ENCODE measurements at regions of chr12 and their contacts with region 1.

Region 1: DNA sequence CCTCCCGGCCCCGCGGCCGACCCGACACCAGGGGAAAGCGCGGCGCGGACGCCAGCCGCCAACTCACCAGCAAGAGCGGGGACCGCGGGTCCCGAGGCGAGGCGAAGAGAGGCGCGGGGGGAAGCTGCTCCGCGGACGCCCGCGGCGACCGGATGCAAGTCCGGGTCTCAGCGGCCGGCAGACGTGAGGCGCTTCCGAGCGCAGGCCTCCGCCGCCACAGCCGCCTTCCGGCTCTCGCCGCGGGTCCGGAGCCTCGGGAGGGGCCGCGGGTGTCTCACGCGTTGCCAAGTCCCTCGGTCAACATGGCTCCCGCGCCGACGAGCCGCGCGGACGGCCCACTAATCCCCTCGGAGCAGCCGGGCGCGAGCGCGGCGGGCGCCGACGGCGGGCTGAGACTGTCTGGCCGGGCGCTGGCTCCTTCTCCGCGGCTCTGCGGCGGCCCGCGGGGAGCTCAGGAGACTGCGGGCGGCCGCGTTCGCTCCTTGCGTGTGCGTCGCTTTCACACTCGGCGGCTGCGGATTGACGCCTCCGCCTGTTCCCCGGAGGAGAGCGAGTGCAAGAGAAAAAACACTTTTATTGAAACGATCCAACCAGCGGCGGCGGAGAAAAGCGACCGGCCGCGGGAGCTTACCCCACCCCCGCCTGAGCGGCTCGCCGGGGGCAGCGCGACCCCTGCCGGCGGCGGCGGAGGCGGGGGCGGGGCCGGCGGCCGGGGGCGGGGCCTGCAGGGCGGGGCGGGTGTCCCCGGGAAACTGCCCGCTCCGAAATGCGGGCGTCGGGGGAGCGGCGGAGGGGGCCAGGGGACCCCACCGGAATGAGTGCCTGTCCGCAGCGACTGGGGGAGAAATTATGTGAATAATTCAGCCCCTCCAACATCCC is at the start of gene CDK17:
- DNase-seq: peak; percentile 82 to 97 (median 88)
- ATAC-seq: peak; percentile 63
- H3K4me3 ChIP-seq: peak within 1 kb of the TSS; percentile 88
- H3K4me3 Mint-ChIP-seq: peak within 1 kb of the TSS; percentile 99
- H3K27ac ChIP-seq: peak within 1 kb of the TSS; percentile 86 to 99
- H3K27ac Mint-ChIP-seq: peak within 1 kb of the TSS; percentile 93
- H3K4me1 ChIP-seq: peaks cover 15% of the 10 kb centered on the region
- H3K4me1 Mint-ChIP-seq: peaks cover 49% of the 10 kb centered on the region
- H3K27me3 ChIP-seq: no peaks in the 10 kb centered on the region
- H3K27me3 Mint-ChIP-seq: no peaks in the 10 kb centered on the region
- CTCF ChIP-seq: no peak
- total RNA-seq, gene CDK17: 112 to 113 TPM

Region 2: GRCh38 chr12:96061864-96062453 is 338.2 kb before region 1 on chr12:
- CTCF ChIA-PET with region 1: interaction called, 4 read pairs
- POLR2A ChIA-PET with region 1: interaction called, 3 read pairs
- intact Hi-C with region 1: loop called (anchors 1 kb)
- DNase-seq: peak; percentile 64 to 90 (median 70)
- ATAC-seq: peak; percentile 90
- H3K4me3 ChIP-seq: no peak overlapping the region
- H3K4me3 Mint-ChIP-seq: no peak overlapping the region
- H3K27ac ChIP-seq: no peak overlapping the region
- H3K27ac Mint-ChIP-seq: no peak overlapping the region
- H3K4me1 ChIP-seq: peaks cover 18% of the 10 kb centered on the region
- H3K4me1 Mint-ChIP-seq: peaks cover 27% of the 10 kb centered on the region
- H3K27me3 ChIP-seq: no peaks in the 10 kb centered on the region
- H3K27me3 Mint-ChIP-seq: no peaks in the 10 kb centered on the region
- CTCF ChIP-seq: peak; percentile 85

Region 3: DNA sequence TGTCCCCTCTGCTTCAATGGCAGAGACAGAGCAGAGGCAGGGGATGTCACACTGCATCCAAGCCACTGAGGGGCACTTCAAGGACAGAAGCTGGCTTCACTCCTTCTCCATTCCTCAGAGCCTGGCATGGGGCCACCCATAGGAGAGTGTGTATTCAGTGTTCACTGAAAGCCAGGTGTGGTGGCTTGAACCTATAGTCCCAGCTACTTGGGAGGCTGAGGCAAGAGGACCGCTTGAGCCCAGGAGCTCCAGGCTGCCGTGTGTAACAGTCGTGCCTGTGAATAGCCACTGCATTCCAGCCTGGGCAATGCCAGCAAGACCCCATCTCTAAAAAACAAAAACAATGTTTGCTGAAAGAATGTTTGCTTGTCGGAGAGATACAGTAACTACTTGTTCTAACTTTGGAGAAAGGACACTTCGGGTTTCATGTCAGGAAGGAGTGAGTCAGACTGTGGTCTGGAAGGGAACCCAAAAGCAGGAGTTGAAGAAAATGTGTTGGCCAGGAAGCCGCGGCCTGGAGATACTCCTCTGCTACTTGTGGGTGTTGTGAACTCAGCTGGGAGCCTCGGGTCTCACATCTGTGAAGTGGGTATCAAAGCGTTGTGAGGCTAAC is 162.6 kb before region 1 on chr12:
- CTCF ChIA-PET with region 1: interaction called, 15 read pairs
- POLR2A ChIA-PET with region 1: interaction called, 9 read pairs
- intact Hi-C with region 1: no loop called
- DNase-seq: peak in 12 of 14 experiments; percentile 23 to 83 (median 43)
- ATAC-seq: peak; percentile 9
- H3K4me3 ChIP-seq: peak overlapping the region; percentile 4
- H3K4me3 Mint-ChIP-seq: peak overlapping the region; percentile 28
- H3K27ac ChIP-seq: peak overlapping the region; percentile 32 to 68
- H3K27ac Mint-ChIP-seq: peak overlapping the region; percentile 97
- H3K4me1 ChIP-seq: peaks cover 86% of the 10 kb centered on the region
- H3K4me1 Mint-ChIP-seq: peaks cover 79% of the 10 kb centered on the region
- H3K27me3 ChIP-seq: no peaks in the 10 kb centered on the region
- H3K27me3 Mint-ChIP-seq: no peaks in the 10 kb centered on the region
- CTCF ChIP-seq: no peak

Region 4: GRCh38 chr12:96308881-96309280 is 91.3 kb before region 1 on chr12:
- CTCF ChIA-PET with region 1: interaction called, 5 read pairs
- POLR2A ChIA-PET with region 1: interaction called, 67 read pairs
- intact Hi-C with region 1: loop called in 1 of 2 experiments (anchors 5 kb)
- DNase-seq: no peak
- ATAC-seq: no peak
- H3K4me3 ChIP-seq: no peak overlapping the region
- H3K4me3 Mint-ChIP-seq: no peak overlapping the region
- H3K27ac ChIP-seq: no peak overlapping the region
- H3K27ac Mint-ChIP-seq: peak overlapping the region; percentile 10
- H3K4me1 ChIP-seq: no peaks in the 10 kb centered on the region
- H3K4me1 Mint-ChIP-seq: peaks cover 40% of the 10 kb centered on the region
- H3K27me3 ChIP-seq: no peaks in the 10 kb centered on the region
- H3K27me3 Mint-ChIP-seq: no peaks in the 10 kb centered on the region
- CTCF ChIP-seq: no peak

Region 5: GRCh38 chr12:96343347-96343954 is 56.7 kb before region 1 on chr12:
- CTCF ChIA-PET with region 1: interaction called, 6 read pairs
- POLR2A ChIA-PET with region 1: interaction called, 49 read pairs
- intact Hi-C with region 1: no loop called
- DNase-seq: peak in 3 of 14 experiments; percentile 51 to 65 (median 61)
- ATAC-seq: no peak
- H3K4me3 ChIP-seq: no peak overlapping the region
- H3K4me3 Mint-ChIP-seq: peak overlapping the region; percentile 35
- H3K27ac ChIP-seq: no peak overlapping the region
- H3K27ac Mint-ChIP-seq: peak overlapping the region; percentile 9
- H3K4me1 ChIP-seq: peaks cover 16% of the 10 kb centered on the region
- H3K4me1 Mint-ChIP-seq: peaks cover 77% of the 10 kb centered on the region
- H3K27me3 ChIP-seq: no peaks in the 10 kb centered on the region
- H3K27me3 Mint-ChIP-seq: no peaks in the 10 kb centered on the region
- CTCF ChIP-seq: no peak

Region 6: DNA sequence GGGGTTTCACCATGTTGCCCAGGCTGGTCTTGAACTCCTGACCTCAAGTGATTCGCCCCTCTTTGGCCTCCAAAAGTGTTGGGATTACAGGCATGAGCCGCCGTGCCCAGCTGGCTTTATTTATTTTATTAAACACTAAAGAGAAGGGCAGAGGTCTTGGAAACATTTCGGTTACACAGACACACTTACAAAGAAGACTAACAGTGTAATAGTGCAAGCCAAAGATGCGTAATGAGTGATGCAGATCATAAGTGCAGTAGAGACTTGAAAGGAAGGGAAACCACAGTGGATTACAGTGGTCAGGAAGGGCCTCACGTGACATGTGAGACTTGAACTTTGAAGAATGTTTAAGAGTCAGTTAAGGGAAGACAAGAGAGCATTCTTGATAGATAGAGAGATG is 33.9 kb after region 1 on chr12:
- CTCF ChIA-PET with region 1: interaction called, 9 read pairs
- POLR2A ChIA-PET with region 1: interaction called, 16 read pairs
- intact Hi-C with region 1: loop called (anchors 1 to 5 kb)
- DNase-seq: peak; percentile 37 to 95 (median 57)
- ATAC-seq: peak; percentile 98
- H3K4me3 ChIP-seq: peak overlapping the region; percentile 6
- H3K4me3 Mint-ChIP-seq: peak overlapping the region; percentile 52
- H3K27ac ChIP-seq: peak overlapping the region; percentile 50 to 73
- H3K27ac Mint-ChIP-seq: peak overlapping the region; percentile 75
- H3K4me1 ChIP-seq: peaks cover 40% of the 10 kb centered on the region
- H3K4me1 Mint-ChIP-seq: peaks cover 26% of the 10 kb centered on the region
- H3K27me3 ChIP-seq: no peaks in the 10 kb centered on the region
- H3K27me3 Mint-ChIP-seq: no peaks in the 10 kb centered on the region
- CTCF ChIP-seq: no peak

Region 7: DNA sequence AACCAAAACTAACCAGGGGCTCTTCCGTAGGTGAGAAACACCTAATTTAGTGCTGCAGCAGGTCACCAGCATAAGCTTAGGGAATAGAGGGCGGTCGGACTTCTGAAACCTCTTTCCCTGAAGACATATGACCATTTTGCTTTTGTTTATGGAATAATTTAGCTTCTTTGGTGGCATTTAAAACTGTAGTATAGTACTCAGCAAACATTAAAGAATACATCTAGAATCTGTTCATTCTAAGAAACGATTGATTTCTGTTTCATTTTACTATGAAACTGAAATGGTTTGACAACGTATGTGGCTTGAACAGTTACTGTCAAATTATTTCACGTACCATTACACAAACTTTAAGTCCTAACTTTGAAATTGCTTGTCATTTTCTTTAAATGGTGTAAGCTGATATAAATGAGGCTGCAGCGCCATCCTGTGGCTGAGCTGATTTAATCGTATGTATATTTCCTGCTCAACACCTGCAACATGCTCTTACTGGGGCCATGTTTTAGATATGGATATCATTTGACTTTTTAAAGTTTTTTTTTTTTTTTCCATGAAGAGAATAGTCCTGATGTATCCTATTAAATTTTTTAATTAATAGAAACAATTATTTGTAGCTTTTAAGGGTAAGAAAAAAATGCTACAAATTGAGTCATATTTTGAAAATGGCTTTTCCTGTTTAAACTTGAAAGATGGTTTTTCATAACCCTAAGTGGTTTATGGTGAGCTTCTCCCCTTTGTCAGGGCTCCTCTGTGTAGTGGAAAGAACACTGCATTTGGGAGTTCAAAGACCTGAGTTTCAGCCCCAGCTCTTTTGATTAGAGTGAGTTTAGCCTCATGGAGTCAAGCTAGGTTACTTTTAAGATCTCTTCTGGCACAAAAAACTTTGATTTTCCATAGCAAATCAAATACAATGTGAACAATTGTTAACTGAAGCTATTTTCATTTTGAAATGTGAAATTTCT is 116.6 kb after region 1 on chr12:
- CTCF ChIA-PET with region 1: interaction called, 42 read pairs
- POLR2A ChIA-PET with region 1: interaction called, 27 read pairs
- intact Hi-C with region 1: loop called (anchors 1 to 2 kb)
- DNase-seq: peak; percentile 77 to 93 (median 86)
- ATAC-seq: peak; percentile 83
- H3K4me3 ChIP-seq: no peak overlapping the region
- H3K4me3 Mint-ChIP-seq: peak overlapping the region; percentile 54
- H3K27ac ChIP-seq: no peak overlapping the region
- H3K27ac Mint-ChIP-seq: peak overlapping the region; percentile 39
- H3K4me1 ChIP-seq: peaks cover 5% of the 10 kb centered on the region
- H3K4me1 Mint-ChIP-seq: peaks cover 14% of the 10 kb centered on the region
- H3K27me3 ChIP-seq: no peaks in the 10 kb centered on the region
- H3K27me3 Mint-ChIP-seq: no peaks in the 10 kb centered on the region
- CTCF ChIP-seq: peak; percentile 68

Measured in CD4-positive, alpha-beta T cell (primary cell).